AG04449 (cell line): ENCODE measurements at regions of chr10 and their contacts with region 1.

Region 1: DNA sequence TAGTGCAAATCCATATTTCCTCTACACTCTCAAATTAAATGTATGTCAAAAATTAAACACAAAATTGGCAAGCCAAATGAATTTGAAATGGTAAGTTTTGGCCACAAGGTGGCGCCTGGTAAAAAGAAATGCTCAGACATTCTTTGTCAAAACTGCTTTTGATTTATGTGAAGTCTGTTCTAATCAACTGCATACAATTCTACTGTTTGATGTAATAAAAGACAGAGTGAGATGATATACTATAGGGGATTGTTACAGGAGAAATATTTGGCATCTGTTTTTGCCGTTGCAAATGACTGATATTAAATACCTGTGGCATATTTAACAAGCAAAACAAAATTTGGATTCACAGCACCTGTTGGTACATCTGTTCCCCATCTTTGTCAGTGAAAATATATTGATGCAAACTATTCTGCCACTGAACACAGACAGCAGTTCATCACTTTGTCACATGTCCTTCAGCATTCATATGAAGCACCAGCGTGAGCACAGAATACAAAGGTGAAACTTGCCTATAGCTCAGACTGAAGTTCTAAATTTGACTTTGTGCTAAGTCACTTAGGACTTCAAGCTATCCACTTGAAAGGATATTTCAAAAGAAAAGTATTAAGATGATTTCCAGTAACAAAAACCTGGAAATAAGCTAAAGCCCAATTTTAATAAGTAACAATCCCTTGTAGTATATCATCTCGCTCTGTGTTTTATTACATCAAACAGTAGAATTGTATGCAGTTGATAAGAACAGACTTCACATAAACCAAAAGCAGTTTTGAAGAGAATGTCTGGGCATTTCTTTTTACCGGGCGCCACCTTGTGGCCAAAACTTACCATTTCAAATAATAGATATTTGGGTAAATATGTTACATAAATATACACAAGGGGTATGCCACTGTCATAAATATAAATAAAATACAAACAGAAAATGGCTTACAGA is 10.2 kb upstream of the CH25H start:
- DNase-seq: no peak
- H3K4me3 ChIP-seq: no peak overlapping the region
- CTCF ChIP-seq: peak; percentile 45

Region 2: GRCh38 chr10:88565072-88565471 is 652.3 kb before region 1 on chr10:
- CTCF ChIA-PET with region 1: interaction called, 12 read pairs
- POLR2A ChIA-PET with region 1: no interaction called
- DNase-seq: no peak
- H3K4me3 ChIP-seq: no peak overlapping the region
- CTCF ChIP-seq: peak; percentile 14

Region 3: DNA sequence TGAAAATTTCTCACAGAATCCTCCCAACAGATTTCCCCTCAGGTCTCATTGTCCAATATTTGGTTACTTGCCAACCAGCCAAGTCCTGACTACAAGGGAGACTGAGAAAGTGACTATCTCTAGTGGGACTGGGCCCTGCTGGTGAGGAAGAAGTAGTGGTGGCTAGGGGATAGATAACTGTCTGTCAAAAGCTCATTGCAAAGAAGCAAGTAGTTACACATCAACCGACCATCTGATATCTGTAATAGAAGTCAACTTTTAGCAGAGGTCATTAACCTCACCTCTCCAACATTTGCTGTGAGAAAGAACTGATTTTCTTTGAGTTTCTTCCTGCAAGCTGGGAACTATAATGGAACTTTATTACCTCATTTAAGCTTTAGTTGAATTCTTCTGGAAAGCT is 322.1 kb before region 1 on chr10:
- CTCF ChIA-PET with region 1: no interaction called
- POLR2A ChIA-PET with region 1: no interaction called
- DNase-seq: no peak
- H3K4me3 ChIP-seq: no peak overlapping the region
- CTCF ChIP-seq: no peak

Region 4: DNA sequence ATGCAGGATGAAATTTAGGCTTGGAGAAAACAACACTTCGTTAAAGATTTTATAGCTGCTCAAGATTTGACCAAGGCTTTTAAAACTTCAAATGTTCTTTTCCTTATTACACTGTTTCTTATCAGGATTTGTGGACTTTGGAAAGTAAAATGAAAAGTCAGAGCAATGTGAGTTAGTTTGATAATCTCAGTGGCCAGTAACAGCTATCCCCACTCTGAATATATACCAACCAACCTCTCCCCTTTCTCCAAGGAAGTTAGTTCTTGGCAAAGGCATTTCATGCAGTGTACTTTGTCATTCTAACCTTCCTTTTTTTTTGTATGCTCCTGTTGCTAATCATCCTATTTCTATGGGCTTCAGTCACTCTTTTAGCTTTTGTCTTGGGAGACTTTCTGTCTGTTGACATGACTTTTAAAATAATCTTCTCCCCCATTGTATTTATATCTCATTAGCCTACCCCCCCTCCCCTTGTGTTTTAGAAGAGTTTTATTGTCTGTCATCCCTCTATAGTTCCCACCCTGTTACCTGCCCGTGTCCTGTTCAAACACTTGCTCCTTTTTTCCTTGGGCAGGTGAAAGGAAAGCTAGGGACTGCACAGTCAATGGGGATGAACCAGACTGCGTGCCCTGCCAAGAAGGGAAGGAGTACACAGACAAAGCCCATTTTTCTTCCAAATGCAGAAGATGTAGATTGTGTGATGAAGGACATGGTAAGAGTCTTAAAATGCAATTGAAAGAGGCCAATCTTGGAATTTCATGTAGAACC is 210.0 kb before region 1 on chr10:
- CTCF ChIA-PET with region 1: interaction called, 19 read pairs
- POLR2A ChIA-PET with region 1: no interaction called
- DNase-seq: no peak
- H3K4me3 ChIP-seq: no peak overlapping the region
- CTCF ChIP-seq: no peak

Region 5: DNA sequence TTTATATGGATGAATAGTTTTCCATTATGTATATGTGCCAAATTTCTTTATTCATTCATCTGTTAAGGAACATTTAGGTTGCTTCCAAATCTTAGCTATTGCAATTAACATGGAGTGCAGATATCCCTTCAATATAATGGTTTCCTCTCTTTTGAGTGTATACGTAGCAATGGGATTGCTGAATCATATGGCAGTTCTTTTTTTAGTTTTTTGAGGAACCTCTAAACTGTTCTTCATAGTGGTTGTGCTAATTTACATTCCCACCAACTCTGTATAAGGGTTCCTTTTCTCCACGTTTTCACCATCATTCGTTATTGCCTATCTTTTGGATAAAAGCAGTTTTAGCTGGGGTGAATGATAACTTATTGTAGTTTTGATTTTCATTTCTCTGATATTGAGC is 180.2 kb before region 1 on chr10:
- CTCF ChIA-PET with region 1: interaction called, 225 read pairs
- POLR2A ChIA-PET with region 1: no interaction called
- DNase-seq: no peak
- H3K4me3 ChIP-seq: no peak overlapping the region
- CTCF ChIP-seq: no peak

Region 6: DNA sequence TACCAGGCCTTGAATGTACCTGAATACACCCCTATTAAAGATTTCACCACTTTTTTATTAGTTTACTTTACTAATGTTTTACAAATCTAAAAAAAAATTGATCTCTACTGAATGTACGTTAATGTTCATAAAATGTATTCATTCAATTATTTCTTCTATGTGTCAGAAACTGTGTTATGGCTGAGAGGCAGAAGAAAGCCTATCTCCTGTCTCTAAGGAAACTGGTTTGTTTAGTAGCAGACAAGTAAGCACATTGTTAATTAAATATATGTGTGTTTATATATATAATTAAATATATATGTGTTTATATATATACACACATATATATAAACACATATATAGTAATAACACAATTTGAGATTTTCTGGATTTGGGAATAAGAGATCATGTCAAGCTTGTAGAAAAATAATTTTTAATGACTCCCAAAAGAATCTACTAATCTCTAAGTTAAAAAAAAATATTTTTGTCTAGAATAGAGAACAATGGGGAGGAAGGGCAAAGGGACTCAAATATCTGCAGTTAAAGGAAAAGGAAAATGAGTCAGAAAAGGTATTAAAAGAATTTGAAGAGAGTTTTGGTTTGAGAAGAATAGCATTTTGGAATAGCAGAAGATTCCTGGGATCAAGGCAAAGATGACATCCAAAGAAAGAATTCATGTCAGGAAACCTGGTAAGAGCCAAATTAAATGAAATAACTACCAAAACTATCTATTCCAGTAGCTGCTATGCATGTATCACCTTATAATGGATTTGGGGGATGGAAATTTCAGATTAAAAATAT is 102.3 kb before region 1 on chr10:
- CTCF ChIA-PET with region 1: no interaction called
- POLR2A ChIA-PET with region 1: no interaction called
- DNase-seq: no peak
- H3K4me3 ChIP-seq: no peak overlapping the region
- CTCF ChIP-seq: no peak

Region 7: DNA sequence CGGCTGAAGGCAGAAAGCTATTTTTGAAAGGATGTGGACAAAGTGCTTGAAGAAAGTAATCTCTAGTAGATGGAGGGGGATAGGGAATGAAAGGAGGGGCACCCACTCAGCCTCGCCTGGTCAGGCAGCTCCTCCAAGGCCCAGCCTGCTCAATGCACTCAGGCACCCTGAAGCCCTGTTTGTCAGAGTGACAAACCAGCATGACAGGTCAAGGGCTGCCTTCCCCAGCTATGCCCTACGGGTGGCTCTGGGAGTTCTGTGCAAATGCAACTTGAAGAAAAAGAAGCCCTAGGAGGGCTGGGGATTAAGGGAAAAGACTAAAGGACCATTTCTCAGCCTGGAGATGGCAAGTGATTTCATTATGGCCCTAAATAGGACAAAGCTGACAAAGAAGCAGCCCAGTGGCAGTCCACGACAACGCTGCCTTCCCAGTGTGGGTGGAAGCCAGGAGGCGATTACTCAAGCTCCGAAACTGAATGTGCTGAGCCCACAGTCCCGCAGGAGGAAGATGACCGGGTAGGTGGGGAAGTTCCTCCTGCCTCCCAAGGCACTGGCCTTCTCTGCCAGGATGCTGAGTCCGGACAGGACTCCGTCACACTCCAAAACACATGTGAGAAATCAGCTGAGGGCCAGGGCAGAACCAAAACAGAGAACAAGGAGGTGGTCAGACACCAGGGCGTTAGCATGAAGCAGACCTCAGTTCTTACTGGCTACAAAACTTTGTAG is 17.9 kb after region 1 on chr10:
- CTCF ChIA-PET with region 1: interaction called, 47 read pairs
- POLR2A ChIA-PET with region 1: no interaction called
- DNase-seq: no peak
- H3K4me3 ChIP-seq: no peak overlapping the region
- CTCF ChIP-seq: no peak

Region 8: GRCh38 chr10:89391917-89392756 is 174.8 kb after region 1 on chr10 and contains the start of gene IFIT1:
- CTCF ChIA-PET with region 1: interaction called, 14 read pairs
- POLR2A ChIA-PET with region 1: no interaction called
- DNase-seq: peak; percentile 85
- H3K4me3 ChIP-seq: peak within 1 kb of the TSS; percentile 75
- CTCF ChIP-seq: no peak